Calu3 (cell line): ENCODE measurements at regions of chrX and their contacts with region 1.

Region 1: DNA sequence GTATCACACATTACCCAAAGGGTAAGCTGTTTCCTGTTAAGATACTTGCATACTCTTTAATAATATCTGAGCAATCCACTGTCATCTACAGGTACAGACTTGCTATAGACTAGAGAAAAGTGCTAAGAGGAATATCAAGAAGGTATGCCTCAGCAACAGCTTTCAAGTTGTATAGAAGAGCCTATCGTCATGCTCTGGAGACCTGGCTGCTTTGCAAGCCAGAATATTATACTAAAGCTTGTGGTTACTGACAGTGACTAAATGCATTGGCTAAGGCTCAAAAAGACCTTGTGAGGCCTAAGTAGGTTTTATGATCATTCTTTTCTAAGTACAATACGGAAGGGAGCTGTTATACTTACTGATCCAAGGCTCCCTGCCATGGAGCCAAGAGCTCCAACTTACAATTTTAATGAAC is 11.3 kb downstream of the LAMP2 start:
- DNase-seq: no peak
- H3K4me3 Mint-ChIP-seq: no peak overlapping the region
- H3K27ac Mint-ChIP-seq: no peak overlapping the region
- H3K4me1 Mint-ChIP-seq: peaks cover 14% of the 10 kb centered on the region
- H3K27me3 Mint-ChIP-seq: no peaks in the 10 kb centered on the region
- CTCF ChIP-seq: no peak

Region 2: DNA sequence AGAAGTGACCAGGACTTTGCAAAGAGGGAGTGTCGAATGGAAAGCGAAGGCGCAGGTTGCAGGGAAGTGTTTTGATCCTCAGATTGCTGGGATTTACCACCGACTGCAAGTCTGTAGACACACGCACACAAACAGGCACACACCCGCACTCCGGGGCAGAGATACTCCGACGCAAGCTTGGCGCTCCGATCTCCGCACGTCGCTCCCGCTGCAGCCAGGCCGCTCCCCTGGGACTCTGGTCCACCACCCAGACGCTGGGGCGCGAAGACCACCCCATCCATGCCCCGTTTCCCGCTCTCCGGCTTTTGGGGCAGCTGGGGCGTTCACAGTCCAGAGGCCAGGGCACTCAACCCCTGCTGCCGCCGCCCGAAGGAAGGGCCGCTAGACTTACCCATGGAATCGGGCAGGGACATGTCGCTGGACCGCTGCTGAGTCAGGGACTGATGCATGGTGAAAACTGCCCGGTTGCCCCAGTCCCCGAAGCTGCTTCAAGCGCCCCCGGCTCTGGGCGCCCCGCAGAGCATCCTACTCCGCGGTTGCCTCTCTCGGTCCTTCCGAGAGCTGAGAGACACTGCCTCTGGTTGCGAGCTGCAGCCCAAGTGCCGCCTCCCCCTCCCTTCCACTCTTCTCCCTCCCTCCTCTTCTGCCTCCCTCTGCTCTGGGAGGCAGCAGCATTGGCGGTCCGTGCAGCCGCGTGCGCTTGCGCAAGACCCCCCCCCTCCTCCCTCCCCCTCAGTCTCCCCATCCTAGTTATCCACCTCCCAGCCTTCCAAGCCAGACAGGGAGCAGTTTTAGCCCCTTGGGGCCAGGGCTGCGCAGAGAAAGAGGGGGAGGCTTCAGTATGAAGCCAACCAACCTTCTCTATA is 146.7 kb before region 1 on chrX and contains the start of gene TMEM255A:
- CTCF ChIA-PET with region 1: no interaction called
- intact Hi-C with region 1: loop called (anchors 10 kb)
- DNase-seq: no peak
- H3K4me3 Mint-ChIP-seq: peak within 1 kb of the TSS; percentile 76
- H3K27ac Mint-ChIP-seq: no peak within 1 kb of the TSS
- H3K4me1 Mint-ChIP-seq: peaks cover 15% of the 10 kb centered on the region
- H3K27me3 Mint-ChIP-seq: peaks cover 41% of the 10 kb centered on the region
- CTCF ChIP-seq: no peak
- total RNA-seq, gene TMEM255A: not detected in 2 replicates